ENCODE measurements at regions of chr4 and their contacts with region 1.

Region 1: GRCh38 chr4:156594624-156595023 is 377.0 kb downstream of the PDGFC start:
- DNase-seq: no peak
- H3K4me3 ChIP-seq: no peak overlapping the region
- H3K27ac ChIP-seq: no peak overlapping the region
- H3K4me1 ChIP-seq: peaks cover 7% of the 10 kb centered on the region; the same call in 1 of the 2 replicates
- H3K27me3 ChIP-seq: no peaks in the 10 kb centered on the region
- CTCF ChIP-seq: no peak

Region 2: GRCh38 chr4:156146571-156146970 is 448.1 kb before region 1 on chr4:
- CTCF ChIA-PET with region 1: no interaction called
- POLR2A ChIA-PET with region 1: no interaction called
- intact Hi-C with region 1: no loop called
- DNase-seq: no peak
- H3K4me3 ChIP-seq: no peak overlapping the region
- H3K27ac ChIP-seq: no peak overlapping the region
- H3K4me1 ChIP-seq: no peaks in the 10 kb centered on the region
- H3K27me3 ChIP-seq: no peaks in the 10 kb centered on the region
- CTCF ChIP-seq: no peak

Region 3: GRCh38 chr4:157045507-157046127 is 451.0 kb after region 1 on chr4:
- CTCF ChIA-PET with region 1: no interaction called
- POLR2A ChIA-PET with region 1: no interaction called
- intact Hi-C with region 1: loop called (anchors 10 kb)
- DNase-seq: peak; percentile 25 to 52
- H3K4me3 ChIP-seq: no peak overlapping the region
- H3K27ac ChIP-seq: no peak overlapping the region
- H3K4me1 ChIP-seq: no peaks in the 10 kb centered on the region
- H3K27me3 ChIP-seq: no peaks in the 10 kb centered on the region
- CTCF ChIP-seq: peak; percentile 70

Measured in PC-9 (cell line).